ENCODE measurements at regions of chr2 and their contacts with region 1.

Region 1: GRCh38 chr2:96305091-96305978 is at the start of gene SNRNP200:
- DNase-seq: peak; percentile 72
- ATAC-seq: peak; percentile 99
- H3K4me3 ChIP-seq: peak within 1 kb of the TSS; percentile 97
- H3K27ac ChIP-seq: peak within 1 kb of the TSS; percentile 91
- H3K4me1 ChIP-seq: peaks cover 8% of the 10 kb centered on the region
- H3K27me3 ChIP-seq: no peaks in the 10 kb centered on the region
- CTCF ChIP-seq: no peak
- POLR2A ChIP-seq: peak; percentile 59; the same call in 1 of the 2 replicates
- RAD21 ChIP-seq: no peak
- total RNA-seq, gene SNRNP200: 44.1 and 44.2 TPM in 2 replicates

Region 2: DNA sequence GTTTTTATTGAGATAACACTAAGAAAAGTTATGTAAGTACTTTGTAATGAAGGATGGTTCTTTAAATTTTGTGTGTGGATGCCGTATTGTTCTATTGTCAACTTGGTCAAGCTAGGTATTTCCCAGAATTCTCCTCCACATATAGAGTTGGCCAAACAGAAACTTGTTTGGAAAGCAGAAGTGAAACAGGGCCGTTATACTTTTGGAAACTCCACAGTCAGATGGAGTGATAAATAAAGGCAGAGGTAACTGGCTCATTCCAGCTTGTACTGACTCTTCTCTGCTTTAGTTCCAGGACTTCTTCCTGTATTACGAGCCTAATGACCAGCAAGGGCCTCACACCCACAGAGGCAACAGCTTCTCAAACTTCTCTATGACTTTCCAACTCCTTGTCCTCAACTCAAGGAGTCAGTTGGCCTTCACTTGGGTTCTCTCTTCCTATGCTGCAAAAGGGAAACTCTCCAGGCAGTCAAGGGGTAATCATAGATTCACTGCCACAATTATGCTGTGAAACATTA is 80.3 kb before region 1 on chr2:
- CTCF ChIA-PET with region 1: no interaction called
- POLR2A ChIA-PET with region 1: no interaction called
- dilution Hi-C with region 1: no loop called
- in situ Hi-C with region 1: no loop called
- intact Hi-C with region 1: no loop called
- DNase-seq: no peak
- ATAC-seq: no peak
- H3K4me3 ChIP-seq: no peak overlapping the region
- H3K27ac ChIP-seq: no peak overlapping the region
- H3K4me1 ChIP-seq: no peaks in the 10 kb centered on the region
- H3K27me3 ChIP-seq: no peaks in the 10 kb centered on the region
- CTCF ChIP-seq: no peak
- POLR2A ChIP-seq: no peak
- RAD21 ChIP-seq: no peak

Region 3: GRCh38 chr2:96291751-96292150 is 13.6 kb before region 1 on chr2:
- CTCF ChIA-PET with region 1: no interaction called
- POLR2A ChIA-PET with region 1: interaction called, 15 read pairs
- dilution Hi-C with region 1: no loop called
- in situ Hi-C with region 1: no loop called
- intact Hi-C with region 1: no loop called
- DNase-seq: no peak
- ATAC-seq: no peak
- H3K4me3 ChIP-seq: no peak overlapping the region
- H3K27ac ChIP-seq: no peak overlapping the region
- H3K4me1 ChIP-seq: no peaks in the 10 kb centered on the region
- H3K27me3 ChIP-seq: no peaks in the 10 kb centered on the region
- CTCF ChIP-seq: no peak
- POLR2A ChIP-seq: no peak
- RAD21 ChIP-seq: no peak

Region 4: DNA sequence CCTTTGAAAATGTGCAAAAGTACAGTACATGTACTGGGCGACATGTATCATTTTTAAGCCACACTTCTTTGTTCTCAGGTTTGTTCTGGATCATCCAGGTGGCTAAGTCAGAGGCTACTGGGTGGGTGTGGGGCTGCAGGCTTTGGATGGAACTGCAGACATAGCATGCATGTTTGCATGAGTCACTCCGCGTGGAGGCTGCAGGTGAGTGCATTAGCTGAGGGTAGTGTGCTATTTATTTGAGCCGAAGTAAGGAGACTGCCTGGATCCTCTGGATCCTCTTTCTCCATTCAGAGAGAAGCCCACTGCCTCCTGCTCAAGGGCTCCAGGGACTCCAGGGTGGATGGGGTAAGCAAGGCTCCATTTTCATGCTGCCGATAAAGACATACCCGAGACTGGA is 209.2 kb after region 1 on chr2:
- CTCF ChIA-PET with region 1: no interaction called
- POLR2A ChIA-PET with region 1: no interaction called
- dilution Hi-C with region 1: no loop called
- in situ Hi-C with region 1: loop called (anchors 10 kb)
- intact Hi-C with region 1: loop called (anchors 1 kb)
- DNase-seq: no peak
- ATAC-seq: no peak
- H3K4me3 ChIP-seq: no peak overlapping the region
- H3K27ac ChIP-seq: no peak overlapping the region
- H3K4me1 ChIP-seq: no peaks in the 10 kb centered on the region
- H3K27me3 ChIP-seq: peaks cover 33% of the 10 kb centered on the region
- CTCF ChIP-seq: no peak
- POLR2A ChIP-seq: no peak
- RAD21 ChIP-seq: no peak

Region 5: GRCh38 chr2:96895726-96896651 is 590.7 kb after region 1 on chr2:
- CTCF ChIA-PET with region 1: no interaction called
- POLR2A ChIA-PET with region 1: no interaction called
- dilution Hi-C with region 1: no loop called
- in situ Hi-C with region 1: no loop called
- intact Hi-C with region 1: no loop called
- DNase-seq: no peak
- ATAC-seq: no peak
- H3K4me3 ChIP-seq: no peak overlapping the region
- H3K27ac ChIP-seq: no peak overlapping the region
- H3K4me1 ChIP-seq: peaks cover 12% of the 10 kb centered on the region
- H3K27me3 ChIP-seq: no peaks in the 10 kb centered on the region; the same call in 1 of the 2 replicates
- CTCF ChIP-seq: no peak
- POLR2A ChIP-seq: no peak
- RAD21 ChIP-seq: no peak